Endothelial cell of umbilical vein (primary cell): ENCODE measurements at regions of chr20 and their contacts with region 1.

Region 1: DNA sequence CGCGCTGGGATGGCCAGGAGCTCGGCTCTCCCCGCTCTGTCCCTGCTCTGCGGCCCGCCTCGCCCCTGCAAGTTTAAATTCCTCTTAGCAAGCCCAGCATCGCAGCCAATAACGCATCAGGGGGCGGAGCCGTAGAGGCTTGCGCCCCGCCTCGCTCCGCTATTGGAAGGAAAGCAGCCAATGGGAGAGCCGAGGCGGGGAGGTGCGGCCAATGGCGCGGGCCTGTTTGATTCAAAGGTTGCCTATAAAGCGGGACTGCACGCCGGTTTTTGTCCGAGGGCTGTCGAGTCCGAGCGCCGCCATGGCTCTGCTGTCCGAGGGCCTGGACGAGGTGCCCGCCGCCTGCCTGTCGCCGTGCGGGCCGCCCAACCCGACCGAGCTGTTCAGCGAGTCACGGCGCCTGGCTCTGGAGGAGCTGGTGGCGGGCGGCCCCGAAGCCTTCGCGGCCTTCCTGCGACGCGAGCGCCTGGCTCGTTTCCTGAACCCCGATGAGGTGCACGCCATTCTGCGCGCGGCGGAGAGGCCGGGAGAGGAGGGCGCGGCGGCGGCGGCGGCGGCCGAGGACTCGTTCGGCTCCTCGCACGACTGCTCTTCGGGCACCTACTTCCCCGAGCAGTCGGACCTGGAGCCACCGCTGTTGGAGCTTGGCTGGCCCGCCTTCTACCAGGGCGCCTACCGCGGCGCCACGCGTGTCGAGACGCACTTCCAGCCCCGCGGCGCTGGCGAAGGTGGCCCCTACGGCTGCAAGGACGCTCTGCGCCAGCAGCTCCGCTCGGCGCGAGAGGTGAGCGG is at the start of gene FAM83D:
- DNase-seq: peak; percentile 100
- H3K4me3 ChIP-seq: peak within 1 kb of the TSS; percentile 60 to 98 (median 95)
- H3K27ac ChIP-seq: peak within 1 kb of the TSS; percentile 43
- H3K4me1 ChIP-seq: peaks cover 23% of the 10 kb centered on the region
- H3K27me3 ChIP-seq: no peaks in the 10 kb centered on the region
- CTCF ChIP-seq: peak in 1 of 2 donors; percentile 92
- POLR2A ChIP-seq: peak; percentile 95
- total RNA-seq, gene FAM83D: 35.5 and 46.0 TPM in 2 replicates

Region 2: DNA sequence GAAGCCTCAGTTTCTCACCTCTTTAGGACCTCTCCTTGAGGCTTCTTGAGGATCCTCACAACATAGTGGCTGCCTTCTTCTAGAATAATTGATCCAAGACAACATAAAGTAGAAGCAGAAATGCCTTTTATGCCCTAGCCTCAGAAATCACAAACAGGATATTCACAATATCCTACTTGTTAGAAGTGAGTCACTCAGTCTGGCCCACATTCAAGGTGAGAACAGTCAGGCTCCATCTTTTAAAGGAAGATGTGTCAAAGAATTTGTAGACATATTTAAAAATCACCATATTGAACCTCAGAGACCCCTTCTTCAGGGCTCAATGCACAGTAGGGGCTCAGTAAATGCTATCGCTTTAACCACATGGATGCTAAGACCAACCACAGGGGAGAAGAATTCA is 21.0 kb before region 1 on chr20:
- CTCF ChIA-PET with region 1: interaction called, 12 read pairs
- POLR2A ChIA-PET with region 1: interaction called, 11 read pairs
- dilution Hi-C with region 1: no loop called
- intact Hi-C with region 1: no loop called
- DNase-seq: peak; percentile 36
- H3K4me3 ChIP-seq: no peak overlapping the region
- H3K27ac ChIP-seq: no peak overlapping the region
- H3K4me1 ChIP-seq: no peaks in the 10 kb centered on the region
- H3K27me3 ChIP-seq: no peaks in the 10 kb centered on the region
- CTCF ChIP-seq: no peak
- POLR2A ChIP-seq: no peak

Region 3: DNA sequence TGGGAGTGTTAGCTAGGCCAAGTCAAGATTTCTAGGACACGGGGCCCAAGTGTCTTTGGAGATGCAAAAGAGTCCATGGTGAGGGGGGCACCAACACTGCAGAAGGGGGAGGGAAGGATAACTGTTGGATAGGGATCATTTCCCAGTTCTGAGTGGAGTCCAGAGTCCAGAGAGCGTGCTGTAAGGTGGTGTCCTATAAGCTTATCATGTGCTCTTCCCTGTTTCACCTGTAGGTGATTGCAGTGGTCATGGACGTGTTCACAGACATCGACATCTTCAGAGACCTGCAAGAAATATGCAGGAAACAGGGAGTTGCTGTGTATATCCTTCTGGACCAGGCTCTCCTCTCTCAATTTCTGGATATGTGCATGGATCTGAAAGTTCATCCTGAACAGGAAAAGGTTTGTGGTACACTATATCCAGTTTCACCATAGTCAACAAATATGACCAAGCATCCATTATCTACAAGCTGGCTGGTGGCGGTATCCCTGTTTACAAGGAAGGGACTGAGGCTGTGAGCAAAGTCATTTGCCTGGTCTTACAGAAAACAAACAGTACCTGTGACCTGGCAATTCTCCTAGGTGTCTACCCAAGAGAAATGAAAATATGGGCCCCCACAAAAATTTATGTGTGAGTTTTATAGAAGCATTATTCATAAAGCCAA is 15.5 kb after region 1 on chr20:
- CTCF ChIA-PET with region 1: interaction called, 8 read pairs
- POLR2A ChIA-PET with region 1: interaction called, 13 read pairs
- dilution Hi-C with region 1: no loop called
- intact Hi-C with region 1: no loop called
- DNase-seq: no peak
- H3K4me3 ChIP-seq: no peak overlapping the region
- H3K27ac ChIP-seq: no peak overlapping the region
- H3K4me1 ChIP-seq: peaks cover 7% of the 10 kb centered on the region
- H3K27me3 ChIP-seq: no peaks in the 10 kb centered on the region
- CTCF ChIP-seq: no peak
- POLR2A ChIP-seq: no peak

Region 4: DNA sequence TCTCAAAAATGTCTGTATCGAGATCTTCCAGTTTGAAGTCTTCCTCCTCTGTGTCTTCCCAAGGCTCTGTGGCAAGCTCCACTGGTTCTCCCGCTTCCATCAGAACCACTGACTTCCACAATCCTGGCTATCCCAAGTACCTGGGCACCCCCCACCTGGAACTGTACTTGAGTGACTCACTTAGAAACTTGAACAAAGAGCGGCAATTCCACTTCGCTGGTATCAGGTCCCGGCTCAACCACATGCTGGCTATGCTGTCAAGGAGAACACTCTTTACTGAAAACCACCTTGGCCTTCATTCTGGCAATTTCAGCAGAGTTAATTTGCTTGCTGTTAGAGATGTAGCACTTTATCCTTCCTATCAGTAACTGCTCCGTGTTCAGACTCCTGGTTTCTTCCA is 25.8 kb after region 1 on chr20:
- CTCF ChIA-PET with region 1: no interaction called
- POLR2A ChIA-PET with region 1: no interaction called
- dilution Hi-C with region 1: no loop called
- intact Hi-C with region 1: no loop called
- DNase-seq: no peak
- H3K4me3 ChIP-seq: no peak overlapping the region
- H3K27ac ChIP-seq: no peak overlapping the region
- H3K4me1 ChIP-seq: no peaks in the 10 kb centered on the region
- H3K27me3 ChIP-seq: no peaks in the 10 kb centered on the region
- CTCF ChIP-seq: no peak
- POLR2A ChIP-seq: no peak